ENCODE measurements at regions of chr12 and their contacts with region 1.

Region 1: DNA sequence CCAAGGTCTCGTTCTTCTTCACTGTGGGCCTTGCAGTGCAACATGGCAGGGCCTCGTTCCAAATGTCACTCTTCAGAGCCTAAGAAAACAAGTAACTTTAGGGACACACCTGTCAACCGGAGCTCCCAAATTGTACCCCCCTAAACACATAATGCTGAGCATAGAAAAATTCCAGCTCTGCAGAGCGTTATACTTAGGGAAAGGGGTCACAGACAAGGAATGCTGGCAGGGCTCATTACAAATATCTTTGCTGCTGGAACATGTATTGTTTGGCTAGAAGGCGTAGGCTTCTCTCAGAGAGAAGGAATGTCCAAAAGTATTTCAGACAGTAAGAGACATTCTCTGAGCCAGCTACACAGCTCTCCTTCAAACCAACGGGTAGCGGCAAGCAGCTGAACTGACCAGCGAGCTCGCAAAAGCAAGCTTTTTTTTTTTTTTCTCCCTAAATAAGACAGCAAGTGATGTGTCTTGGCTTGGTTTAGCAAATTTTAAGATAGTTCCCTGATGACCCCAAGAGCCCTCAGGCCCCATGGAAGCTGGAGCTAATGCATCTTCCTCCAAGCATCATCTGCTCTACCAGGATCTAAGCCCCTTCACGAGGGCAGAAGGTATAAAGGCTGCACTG is 24.5 kb downstream of the SSH1 start:
- DNase-seq: peak; percentile 53
- ATAC-seq: peak; percentile 57
- H3K4me3 ChIP-seq: no peak overlapping the region
- H3K27ac ChIP-seq: peak overlapping the region; percentile 41
- H3K4me1 ChIP-seq: peaks cover 26% of the 10 kb centered on the region
- H3K27me3 ChIP-seq: no peaks in the 10 kb centered on the region
- CTCF ChIP-seq: no peak

Region 2: GRCh38 chr12:108821407-108822397 is 11.1 kb before region 1 on chr12:
- CTCF ChIA-PET with region 1: interaction called, 13 read pairs
- POLR2A ChIA-PET with region 1: interaction called, 3 read pairs
- intact Hi-C with region 1: no loop called
- DNase-seq: no peak
- ATAC-seq: no peak
- H3K4me3 ChIP-seq: no peak overlapping the region
- H3K27ac ChIP-seq: no peak overlapping the region
- H3K4me1 ChIP-seq: no peaks in the 10 kb centered on the region
- H3K27me3 ChIP-seq: no peaks in the 10 kb centered on the region
- CTCF ChIP-seq: peak; percentile 27; the same call in 1 of the 2 replicates

Measured in PC-3 (cell line).